H1 (cell line): ENCODE measurements at regions of chr12 and their contacts with region 1.

Region 1: DNA sequence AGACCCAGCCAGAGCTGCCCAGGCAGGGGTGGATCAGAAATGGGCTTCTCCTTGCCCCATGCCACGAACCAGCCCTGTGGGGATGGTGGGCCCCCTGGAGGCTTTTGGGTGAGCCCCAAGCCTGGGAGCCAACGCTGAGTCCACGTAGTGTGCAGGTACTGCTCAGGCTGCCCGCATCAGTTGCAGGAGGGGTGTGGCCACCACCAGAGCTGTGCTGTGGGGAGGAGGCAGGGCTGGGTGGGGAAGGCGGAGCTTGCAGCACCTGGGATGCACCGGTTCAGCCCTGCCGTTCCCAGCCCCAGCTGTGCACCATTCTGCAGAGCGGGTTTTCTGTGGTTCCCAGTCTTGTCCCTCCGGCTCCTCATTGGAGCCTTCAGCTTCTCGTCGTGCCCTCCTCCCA is 36.3 kb downstream of the IL31 start:
- DNase-seq: peak in 1 of 2 experiments; percentile 82
- H3K4me3 ChIP-seq: peak overlapping the region in 3 of 4 experiments; percentile 4 to 37 (median 10); a peak in 2 of 8 replicates
- H3K27ac ChIP-seq: 0 out of 2 replicates have a peak overlapping the region, but pooled peaks have one; percentile 29
- H3K4me1 ChIP-seq: peaks cover 0 to 8% (median 3%) of the 10 kb centered on the region in 4 experiments; a peak in 5 of 7 replicates
- H3K27me3 ChIP-seq: no peaks in the 10 kb centered on the region; a peak in 1 of 7 replicates
- CTCF ChIP-seq: no peak
- EP300 ChIP-seq: no peak
- POLR2A ChIP-seq: no peak
- RAD21 ChIP-seq: no peak

Region 2: DNA sequence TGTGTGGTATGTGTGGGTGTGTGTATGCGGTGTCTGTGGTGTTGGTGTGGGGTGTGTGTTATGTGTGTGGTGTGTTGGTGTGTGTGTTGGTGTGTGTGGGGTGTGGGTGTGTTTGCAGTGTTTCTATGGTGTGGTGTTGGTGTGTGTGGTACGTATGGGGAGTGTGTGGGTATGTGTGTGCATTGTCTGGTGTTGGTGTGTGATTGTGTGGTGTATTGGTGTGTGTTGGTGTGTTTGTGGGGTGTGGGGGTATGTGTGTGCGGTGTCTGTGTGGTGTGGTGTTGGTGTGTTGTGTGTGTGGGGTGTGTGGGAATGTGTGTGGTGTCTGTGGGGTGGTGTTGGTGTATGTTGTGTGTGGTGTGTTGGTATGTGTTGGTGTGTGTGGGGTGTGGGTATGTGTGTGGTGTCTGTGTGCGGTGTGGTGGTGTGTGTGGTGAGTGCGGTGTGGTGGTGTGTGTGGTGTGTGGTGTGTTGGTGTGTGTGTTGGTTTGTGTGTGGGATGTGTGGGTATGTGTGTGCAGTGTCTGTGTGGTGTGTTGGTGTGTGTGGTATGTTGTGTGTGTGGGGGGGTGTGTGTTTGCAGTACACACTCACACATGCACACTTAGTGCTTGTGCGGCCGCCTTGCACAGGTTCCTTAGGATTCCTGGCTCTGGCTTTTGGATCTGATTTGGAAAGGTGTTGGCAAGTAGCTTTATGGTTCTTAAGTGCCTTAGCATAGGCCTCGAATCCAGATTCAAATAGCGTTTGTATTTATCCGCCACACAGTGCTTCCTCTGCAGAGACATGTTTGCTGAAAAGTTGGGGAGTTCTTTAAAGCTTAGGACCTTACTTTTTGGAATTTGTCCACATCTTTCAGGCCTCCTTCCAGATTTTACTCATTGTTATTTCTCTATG is 42.7 kb before region 1 on chr12:
- CTCF ChIA-PET with region 1: no interaction called
- POLR2A ChIA-PET with region 1: no interaction called
- DNase-seq: no peak
- H3K4me3 ChIP-seq: no peak overlapping the region
- H3K27ac ChIP-seq: no peak overlapping the region
- H3K4me1 ChIP-seq: peaks cover 0 to 6% (median 0%) of the 10 kb centered on the region in 4 experiments; a peak in 3 of 7 replicates
- H3K27me3 ChIP-seq: no peaks in the 10 kb centered on the region; a peak in 1 of 7 replicates
- CTCF ChIP-seq: no peak
- EP300 ChIP-seq: no peak
- POLR2A ChIP-seq: no peak
- RAD21 ChIP-seq: no peak

Region 3: DNA sequence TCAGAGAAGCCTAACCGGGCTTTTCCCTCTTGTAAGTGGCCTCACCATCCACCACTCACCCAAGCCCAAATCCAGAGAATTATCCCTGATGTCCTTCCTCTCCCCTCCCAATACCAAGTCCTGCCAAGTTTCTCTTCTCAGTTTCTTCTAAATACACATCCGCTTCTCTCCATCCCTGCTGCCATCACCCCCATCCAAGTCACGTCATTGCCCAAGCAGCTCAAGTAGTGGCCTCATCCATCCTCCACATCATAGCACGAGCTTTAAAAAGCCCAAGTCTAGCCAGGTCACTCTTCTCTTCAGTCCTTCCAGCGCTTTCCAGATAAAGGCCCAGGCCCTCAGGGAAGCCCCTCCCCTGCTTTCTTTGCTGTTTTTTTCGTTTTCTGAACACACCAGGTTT is 11.0 kb after region 1 on chr12:
- CTCF ChIA-PET with region 1: interaction called, 18 read pairs
- POLR2A ChIA-PET with region 1: interaction called, 6 read pairs
- DNase-seq: no peak
- H3K4me3 ChIP-seq: no peak overlapping the region
- H3K27ac ChIP-seq: no peak overlapping the region
- H3K4me1 ChIP-seq: peaks cover 0 to 5% (median 0%) of the 10 kb centered on the region in 4 experiments; a peak in 1 of 7 replicates
- H3K27me3 ChIP-seq: no peaks in the 10 kb centered on the region
- CTCF ChIP-seq: no peak
- EP300 ChIP-seq: no peak
- POLR2A ChIP-seq: no peak
- RAD21 ChIP-seq: no peak

Region 4: GRCh38 chr12:122159882-122160281 is 22.2 kb after region 1 on chr12:
- CTCF ChIA-PET with region 1: interaction called, 12 read pairs
- POLR2A ChIA-PET with region 1: no interaction called
- DNase-seq: no peak
- H3K4me3 ChIP-seq: no peak overlapping the region
- H3K27ac ChIP-seq: no peak overlapping the region
- H3K4me1 ChIP-seq: no peaks in the 10 kb centered on the region; a peak in 1 of 7 replicates
- H3K27me3 ChIP-seq: no peaks in the 10 kb centered on the region
- CTCF ChIP-seq: peak in 1 of 3 experiments; percentile 21; a peak in 1 of 4 replicates
- EP300 ChIP-seq: no peak
- POLR2A ChIP-seq: no peak
- RAD21 ChIP-seq: peak; percentile 41 to 50